Heart left ventricle (tissue), 16 donors: ENCODE measurements at regions of chr2 and their contacts with region 1.

Region 1: GRCh38 chr2:187842978-187843847 is 289.0 kb upstream of the TFPI start:
- DNase-seq: no peak
- ATAC-seq: no peak
- H3K4me3 ChIP-seq: no peak overlapping the region
- H3K27ac ChIP-seq: no peak overlapping the region
- H3K4me1 ChIP-seq: no peaks in the 10 kb centered on the region
- H3K27me3 ChIP-seq: no peaks in the 10 kb centered on the region
- CTCF ChIP-seq: peak; percentile 23 to 64 (median 46)
- POLR2A ChIP-seq: no peak

Region 2: DNA sequence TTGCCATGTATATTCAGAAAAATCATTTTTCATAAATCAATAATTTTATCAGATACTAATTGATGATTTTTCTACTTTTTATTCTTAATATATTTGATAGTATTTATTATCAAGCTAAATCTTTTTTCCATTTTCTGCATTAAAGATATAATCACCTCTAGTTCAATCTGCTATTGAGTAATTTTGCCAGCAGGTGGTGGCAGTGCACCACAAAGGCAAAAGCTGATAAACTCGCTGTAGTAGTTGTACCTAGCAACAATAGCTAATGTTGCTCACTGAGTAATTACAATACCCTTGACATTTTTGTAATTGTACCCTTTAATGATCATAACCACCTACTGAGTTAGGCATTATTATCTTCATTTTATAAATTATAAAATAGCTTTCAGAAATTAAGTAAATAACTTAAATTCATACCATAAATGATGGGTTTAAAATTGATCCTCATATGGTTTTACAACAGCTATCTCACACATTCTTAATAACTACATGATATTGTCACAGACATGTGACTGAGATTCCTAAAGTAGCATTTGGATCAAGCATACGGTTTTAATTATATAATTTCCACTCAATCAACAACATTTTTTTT is 343.2 kb before region 1 on chr2:
- intact Hi-C with region 1: loop called in 9 of 10 experiments (anchors 5 to 10 kb)
- DNase-seq: peak in 3 of 5 donors; percentile 30 to 41 (median 39)
- ATAC-seq: peak in 3 of 4 donors; percentile 39 to 77 (median 62)
- H3K4me3 ChIP-seq: no peak overlapping the region
- H3K27ac ChIP-seq: no peak overlapping the region
- H3K4me1 ChIP-seq: peaks cover 0 to 35% (median 0%) of the 10 kb centered on the region in 12 donors
- H3K27me3 ChIP-seq: no peaks in the 10 kb centered on the region
- CTCF ChIP-seq: peak; percentile 70 to 96 (median 84)
- POLR2A ChIP-seq: no peak

Region 3: DNA sequence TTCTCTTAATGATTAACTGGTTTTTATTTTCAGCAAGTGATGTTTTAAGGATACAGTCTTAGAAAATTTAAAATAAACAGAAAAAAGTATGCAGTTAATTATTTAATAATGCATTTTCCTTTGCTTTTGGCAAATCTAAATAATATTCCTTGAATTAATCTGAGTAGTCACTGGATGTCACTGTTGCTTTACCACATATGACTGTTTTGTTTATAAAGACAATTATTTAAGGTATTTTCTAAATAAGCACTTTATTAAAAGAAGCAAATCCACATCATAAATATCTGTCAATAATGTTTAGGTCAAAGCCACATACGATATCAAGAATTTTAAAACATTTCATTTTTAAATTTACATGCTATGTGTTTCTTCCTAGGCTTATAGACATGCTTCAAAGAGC is 248.4 kb before region 1 on chr2:
- intact Hi-C with region 1: loop called in 1 of 10 experiments (anchors 10 kb)
- DNase-seq: no peak
- ATAC-seq: no peak
- H3K4me3 ChIP-seq: no peak overlapping the region
- H3K27ac ChIP-seq: no peak overlapping the region
- H3K4me1 ChIP-seq: no peaks in the 10 kb centered on the region
- H3K27me3 ChIP-seq: no peaks in the 10 kb centered on the region
- CTCF ChIP-seq: peak in 4 of 12 donors; percentile 14 to 33 (median 26)
- POLR2A ChIP-seq: no peak

Region 4: DNA sequence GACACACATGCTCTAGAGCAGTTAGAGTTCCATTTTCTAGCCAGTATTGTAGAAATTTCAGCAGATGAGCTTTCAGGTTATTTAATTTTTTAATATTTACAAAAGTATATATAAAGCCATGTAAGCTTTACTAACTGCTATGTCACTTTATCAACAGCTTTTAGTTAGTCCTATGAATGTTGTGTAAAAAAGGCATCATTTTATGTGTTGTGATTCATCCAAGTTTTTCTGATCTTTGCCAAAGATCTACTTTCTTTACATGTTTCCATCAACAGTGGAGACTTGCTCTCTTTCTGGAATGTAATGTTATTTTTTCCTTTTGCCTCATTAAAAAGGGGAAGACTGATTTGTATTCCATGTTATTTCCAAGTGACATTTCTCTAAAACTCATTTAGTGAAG is 163.8 kb before region 1 on chr2:
- intact Hi-C with region 1: no loop called
- DNase-seq: no peak
- ATAC-seq: no peak
- H3K4me3 ChIP-seq: no peak overlapping the region
- H3K27ac ChIP-seq: no peak overlapping the region
- H3K4me1 ChIP-seq: no peaks in the 10 kb centered on the region
- H3K27me3 ChIP-seq: no peaks in the 10 kb centered on the region
- CTCF ChIP-seq: no peak
- POLR2A ChIP-seq: no peak

Region 5: GRCh38 chr2:188506843-188507242 is 663.6 kb after region 1 on chr2:
- intact Hi-C with region 1: loop called in 1 of 10 experiments (anchors 10 kb)
- DNase-seq: no peak
- ATAC-seq: no peak
- H3K4me3 ChIP-seq: no peak overlapping the region
- H3K27ac ChIP-seq: no peak overlapping the region
- H3K4me1 ChIP-seq: no peaks in the 10 kb centered on the region
- H3K27me3 ChIP-seq: no peaks in the 10 kb centered on the region
- CTCF ChIP-seq: no peak
- POLR2A ChIP-seq: no peak